ENCODE measurements at regions of chr2 and their contacts with region 1.

Region 1: GRCh38 chr2:237966565-237967462 is at the start of gene UBE2F:
- DNase-seq: peak; percentile 95 to 97 (median 97)
- H3K4me3 ChIP-seq: peak within 1 kb of the TSS; percentile 58 to 77
- H3K4me3 Mint-ChIP-seq: peak within 1 kb of the TSS; percentile 84 to 92 (median 87)
- H3K27ac ChIP-seq: peak within 1 kb of the TSS; percentile 61
- H3K27ac Mint-ChIP-seq: peak within 1 kb of the TSS; percentile 81 to 96 (median 91)
- H3K4me1 ChIP-seq: peaks cover 40% of the 10 kb centered on the region
- H3K4me1 Mint-ChIP-seq: peaks cover 32 to 52% (median 42%) of the 10 kb centered on the region in 4 donors
- H3K27me3 ChIP-seq: no peaks in the 10 kb centered on the region
- H3K27me3 Mint-ChIP-seq: no peaks in the 10 kb centered on the region
- total RNA-seq, gene UBE2F: 35.7 to 39.3 TPM

Region 2: DNA sequence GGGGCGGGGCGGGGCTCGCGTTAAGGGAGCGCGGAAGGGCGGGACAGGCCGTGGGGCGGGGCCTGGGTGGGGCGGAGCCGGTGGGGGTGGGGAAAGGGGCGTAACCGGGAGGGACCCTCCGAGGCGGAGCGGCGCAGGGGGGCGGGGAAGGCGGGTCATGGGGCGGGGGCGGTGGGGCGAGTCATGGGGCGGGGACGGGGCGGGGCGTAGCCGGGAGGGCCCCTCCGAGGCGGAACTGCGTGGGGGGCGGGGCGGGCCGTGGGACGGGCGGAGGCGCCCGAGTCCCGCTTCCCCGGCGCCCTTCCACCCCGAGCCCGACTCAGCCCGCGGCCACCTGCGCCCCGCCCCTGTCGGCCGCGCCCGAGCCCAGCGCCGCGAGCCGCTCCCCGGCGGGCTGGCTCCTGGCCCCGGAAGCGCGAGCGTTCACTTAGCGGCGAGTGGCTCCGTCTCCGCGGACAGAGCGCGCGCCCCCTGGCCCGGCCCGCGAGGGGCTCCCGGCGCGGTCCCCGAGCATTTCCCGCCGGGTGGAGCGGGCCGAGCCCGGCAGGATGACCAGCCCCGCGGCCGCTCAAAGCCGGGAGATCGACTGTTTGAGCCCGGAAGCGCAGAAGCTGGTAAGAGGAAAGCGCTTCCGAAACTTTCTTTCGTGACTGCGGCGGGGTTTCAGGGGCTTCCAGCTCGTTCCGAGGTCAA is 274.8 kb before region 1 on chr2:
- CTCF ChIA-PET with region 1: no interaction called
- POLR2A ChIA-PET with region 1: no interaction called
- intact Hi-C with region 1: loop called (anchors 5 kb)
- DNase-seq: peak; percentile 91 to 94 (median 93)
- H3K4me3 ChIP-seq: peak overlapping the region; percentile 79 to 89
- H3K4me3 Mint-ChIP-seq: peak overlapping the region; percentile 90 to 97 (median 93)
- H3K27ac ChIP-seq: peak overlapping the region; percentile 96
- H3K27ac Mint-ChIP-seq: peak overlapping the region; percentile 93 to 99 (median 97)
- H3K4me1 ChIP-seq: peaks cover 76% of the 10 kb centered on the region
- H3K4me1 Mint-ChIP-seq: peaks cover 55 to 82% (median 69%) of the 10 kb centered on the region in 4 donors
- H3K27me3 ChIP-seq: no peaks in the 10 kb centered on the region
- H3K27me3 Mint-ChIP-seq: no peaks in the 10 kb centered on the region

Region 3: GRCh38 chr2:237923481-237924163 is 43.2 kb before region 1 on chr2:
- CTCF ChIA-PET with region 1: interaction called, 16 read pairs
- POLR2A ChIA-PET with region 1: interaction called, 4 read pairs
- intact Hi-C with region 1: loop called (anchors 2 kb)
- DNase-seq: peak; percentile 63 to 77 (median 75)
- H3K4me3 ChIP-seq: peak overlapping the region in 1 of 2 donors; percentile 35
- H3K4me3 Mint-ChIP-seq: peak overlapping the region; percentile 57 to 83 (median 66)
- H3K27ac ChIP-seq: no peak overlapping the region
- H3K27ac Mint-ChIP-seq: peak overlapping the region in 4 of 7 donors; percentile 7 to 65 (median 58)
- H3K4me1 ChIP-seq: peaks cover 16% of the 10 kb centered on the region
- H3K4me1 Mint-ChIP-seq: peaks cover 17 to 30% (median 22%) of the 10 kb centered on the region in 4 donors
- H3K27me3 ChIP-seq: no peaks in the 10 kb centered on the region
- H3K27me3 Mint-ChIP-seq: no peaks in the 10 kb centered on the region

Region 4: DNA sequence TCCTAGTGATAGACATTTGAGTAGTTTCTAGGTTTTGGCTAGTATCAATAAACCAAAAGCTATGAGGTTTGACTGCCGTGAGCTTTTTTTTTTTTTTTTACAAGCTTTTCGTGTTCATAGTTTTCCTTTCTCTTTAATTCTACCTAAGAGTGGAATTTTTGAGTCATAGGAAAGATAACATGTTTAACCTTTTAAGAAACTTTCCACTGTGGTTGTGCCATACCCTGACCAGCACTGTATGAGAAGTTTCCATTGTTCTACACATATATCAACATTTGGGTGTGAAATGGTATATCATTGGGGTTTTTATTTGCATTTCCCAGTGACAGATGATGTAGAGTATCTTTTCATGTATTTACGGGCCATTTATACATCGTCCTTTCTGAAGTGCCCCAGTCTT is 31.7 kb after region 1 on chr2:
- CTCF ChIA-PET with region 1: no interaction called
- POLR2A ChIA-PET with region 1: no interaction called
- intact Hi-C with region 1: loop called (anchors 2 kb)
- DNase-seq: peak; percentile 13 to 59 (median 39)
- H3K4me3 ChIP-seq: peak overlapping the region in 1 of 2 donors; percentile 11
- H3K4me3 Mint-ChIP-seq: peak overlapping the region; percentile 31 to 84 (median 64)
- H3K27ac ChIP-seq: peak overlapping the region; percentile 26
- H3K27ac Mint-ChIP-seq: peak overlapping the region; percentile 81 to 94 (median 88)
- H3K4me1 ChIP-seq: peaks cover 22% of the 10 kb centered on the region
- H3K4me1 Mint-ChIP-seq: peaks cover 21 to 48% (median 38%) of the 10 kb centered on the region in 4 donors
- H3K27me3 ChIP-seq: no peaks in the 10 kb centered on the region
- H3K27me3 Mint-ChIP-seq: no peaks in the 10 kb centered on the region

Region 5: GRCh38 chr2:238203094-238203972 is 236.5 kb after region 1 on chr2 and contains the start of gene ILKAP:
- CTCF ChIA-PET with region 1: no interaction called
- POLR2A ChIA-PET with region 1: interaction called, 4 read pairs
- intact Hi-C with region 1: loop called (anchors 1 kb)
- DNase-seq: peak; percentile 88 to 93 (median 91)
- H3K4me3 ChIP-seq: peak within 1 kb of the TSS; percentile 30 to 72
- H3K4me3 Mint-ChIP-seq: peak within 1 kb of the TSS; percentile 87 to 94 (median 91)
- H3K27ac ChIP-seq: peak within 1 kb of the TSS; percentile 79
- H3K27ac Mint-ChIP-seq: peak within 1 kb of the TSS; percentile 89 to 97 (median 94)
- H3K4me1 ChIP-seq: peaks cover 48% of the 10 kb centered on the region
- H3K4me1 Mint-ChIP-seq: peaks cover 28 to 46% (median 36%) of the 10 kb centered on the region in 4 donors
- H3K27me3 ChIP-seq: no peaks in the 10 kb centered on the region
- H3K27me3 Mint-ChIP-seq: no peaks in the 10 kb centered on the region
- total RNA-seq, gene ILKAP: 78.2 to 87.8 TPM

Region 6: GRCh38 chr2:238263204-238264071 is 296.6 kb after region 1 on chr2:
- CTCF ChIA-PET with region 1: interaction called, 5 read pairs
- POLR2A ChIA-PET with region 1: no interaction called
- intact Hi-C with region 1: loop called (anchors 1 kb)
- DNase-seq: peak; percentile 64 to 70 (median 68)
- H3K4me3 ChIP-seq: no peak overlapping the region
- H3K4me3 Mint-ChIP-seq: peak overlapping the region in 2 of 8 donors; percentile 30 to 43
- H3K27ac ChIP-seq: no peak overlapping the region
- H3K27ac Mint-ChIP-seq: peak overlapping the region in 2 of 7 donors; percentile 25 to 52
- H3K4me1 ChIP-seq: no peaks in the 10 kb centered on the region
- H3K4me1 Mint-ChIP-seq: peaks cover 7 to 18% (median 9%) of the 10 kb centered on the region in 4 donors
- H3K27me3 ChIP-seq: no peaks in the 10 kb centered on the region
- H3K27me3 Mint-ChIP-seq: no peaks in the 10 kb centered on the region